ENCODE measurements at regions of chr17 and their contacts with region 1.

Region 1: GRCh38 chr17:17356149-17356930 is 53.2 kb downstream of the NT5M start:
- DNase-seq: no peak
- H3K4me3 ChIP-seq: no peak overlapping the region
- H3K27ac ChIP-seq: no peak overlapping the region
- H3K4me1 ChIP-seq: peaks cover 0 to 24% (median 0%) of the 10 kb centered on the region in 3 donors
- H3K27me3 ChIP-seq: peaks cover 0 to 21% (median 0%) of the 10 kb centered on the region in 4 donors
- CTCF ChIP-seq: peak; percentile 95 to 100 (median 98)
- POLR2A ChIP-seq: no peak

Region 2: DNA sequence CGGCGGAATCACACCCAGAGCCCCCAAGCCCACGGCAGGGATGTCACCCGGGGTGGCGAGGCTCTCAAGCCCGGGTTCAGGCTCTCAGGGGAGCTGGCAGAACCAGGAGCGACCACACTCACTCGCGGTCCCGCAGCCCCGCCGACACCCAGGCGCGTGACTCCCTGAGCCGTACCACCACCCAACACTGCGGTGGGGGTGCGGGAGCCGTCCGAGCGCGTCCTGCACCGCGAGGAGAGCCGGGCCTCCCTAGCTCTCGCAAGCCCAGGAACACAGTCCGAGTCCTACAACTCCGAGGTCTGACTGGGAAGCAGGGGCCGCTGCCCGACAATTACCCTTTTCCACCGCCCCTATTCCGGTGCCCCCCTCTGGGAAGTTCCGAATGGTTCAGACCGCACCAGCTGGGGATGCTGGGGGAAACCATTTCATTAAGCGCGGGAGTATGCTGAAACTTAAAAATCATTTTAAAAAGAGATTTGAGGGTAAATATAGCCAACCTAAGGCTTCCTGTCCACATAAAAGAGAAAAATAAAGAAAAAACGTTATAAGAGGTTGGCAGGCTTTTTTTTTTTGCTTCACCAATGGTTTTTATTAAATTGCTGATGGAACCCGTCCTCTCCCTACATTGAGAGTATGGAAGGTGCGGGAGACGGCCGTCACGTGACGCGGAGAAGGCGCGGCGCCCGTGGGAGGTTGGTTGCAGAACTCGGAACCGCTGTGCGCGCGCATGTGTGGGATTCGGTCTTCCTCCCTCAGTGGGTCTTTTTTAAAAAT is 119.1 kb before region 1 on chr17 and contains the start of gene FLCN:
- intact Hi-C with region 1: no loop called
- DNase-seq: peak; percentile 57
- H3K4me3 ChIP-seq: peak within 1 kb of the TSS; percentile 85 to 96 (median 92)
- H3K27ac ChIP-seq: peak within 1 kb of the TSS; percentile 96 to 98 (median 97)
- H3K4me1 ChIP-seq: peaks cover 11 to 46% (median 25%) of the 10 kb centered on the region in 3 donors
- H3K27me3 ChIP-seq: no peaks in the 10 kb centered on the region
- CTCF ChIP-seq: peak in 2 of 6 experiments; percentile 21 to 32
- POLR2A ChIP-seq: peak in 3 of 4 donors; percentile 20 to 77 (median 62)
- total RNA-seq, gene FLCN: 11.6 to 27.5 (median 12.4) TPM

Region 3: GRCh38 chr17:17496189-17497064 is 140.1 kb after region 1 on chr17 and contains the start of gene RASD1:
- intact Hi-C with region 1: loop called (anchors 10 kb)
- DNase-seq: no peak
- H3K4me3 ChIP-seq: peak within 1 kb of the TSS; percentile 58 to 77 (median 62)
- H3K27ac ChIP-seq: peak within 1 kb of the TSS; percentile 80 to 87 (median 86)
- H3K4me1 ChIP-seq: peaks cover 18 to 43% (median 20%) of the 10 kb centered on the region in 3 donors
- H3K27me3 ChIP-seq: peaks cover 0 to 20% (median 0%) of the 10 kb centered on the region in 4 donors
- CTCF ChIP-seq: peak; percentile 90 to 98 (median 96)
- POLR2A ChIP-seq: peak in 3 of 4 donors; percentile 50 to 98 (median 97)
- total RNA-seq, gene RASD1: 1.1 to 8.4 (median 4.3) TPM

Region 4: DNA sequence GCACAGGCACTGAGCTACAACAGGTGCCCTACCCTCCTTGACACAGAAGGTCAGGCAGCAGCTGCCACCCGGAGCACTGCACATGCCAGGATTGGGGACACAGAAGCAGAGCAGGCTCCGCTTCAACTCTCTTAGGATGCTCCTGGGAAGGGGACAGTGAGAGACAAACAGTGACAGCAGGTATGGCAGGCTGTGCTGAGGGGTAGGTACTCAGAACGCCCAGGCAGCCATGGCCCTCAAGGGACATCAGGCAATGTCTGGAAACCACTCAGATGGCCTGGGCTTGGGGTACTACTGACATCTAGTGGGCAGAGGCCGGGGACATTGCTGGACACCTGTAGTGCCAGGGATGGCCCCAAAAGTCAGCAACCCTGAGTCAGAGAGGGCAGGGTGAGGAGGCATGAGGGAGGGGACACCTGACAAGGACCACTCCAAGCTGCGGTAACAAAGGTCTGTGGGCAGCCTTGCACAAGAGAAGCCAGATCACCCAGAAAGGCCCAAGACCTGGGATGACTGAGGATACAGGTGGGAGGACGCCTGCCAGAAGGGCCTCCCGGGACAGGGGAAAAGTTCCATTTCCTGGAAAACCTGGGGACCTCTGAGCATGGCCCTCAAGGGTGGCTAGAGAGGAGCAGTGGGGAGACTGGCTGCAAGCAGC is 213.9 kb after region 1 on chr17:
- intact Hi-C with region 1: loop called (anchors 5 kb)
- DNase-seq: no peak
- H3K4me3 ChIP-seq: no peak overlapping the region
- H3K27ac ChIP-seq: no peak overlapping the region
- H3K4me1 ChIP-seq: peaks cover 16 to 44% (median 33%) of the 10 kb centered on the region in 3 donors
- H3K27me3 ChIP-seq: no peaks in the 10 kb centered on the region
- CTCF ChIP-seq: peak in 3 of 6 experiments; percentile 8 to 32 (median 11)
- POLR2A ChIP-seq: no peak

Region 5: DNA sequence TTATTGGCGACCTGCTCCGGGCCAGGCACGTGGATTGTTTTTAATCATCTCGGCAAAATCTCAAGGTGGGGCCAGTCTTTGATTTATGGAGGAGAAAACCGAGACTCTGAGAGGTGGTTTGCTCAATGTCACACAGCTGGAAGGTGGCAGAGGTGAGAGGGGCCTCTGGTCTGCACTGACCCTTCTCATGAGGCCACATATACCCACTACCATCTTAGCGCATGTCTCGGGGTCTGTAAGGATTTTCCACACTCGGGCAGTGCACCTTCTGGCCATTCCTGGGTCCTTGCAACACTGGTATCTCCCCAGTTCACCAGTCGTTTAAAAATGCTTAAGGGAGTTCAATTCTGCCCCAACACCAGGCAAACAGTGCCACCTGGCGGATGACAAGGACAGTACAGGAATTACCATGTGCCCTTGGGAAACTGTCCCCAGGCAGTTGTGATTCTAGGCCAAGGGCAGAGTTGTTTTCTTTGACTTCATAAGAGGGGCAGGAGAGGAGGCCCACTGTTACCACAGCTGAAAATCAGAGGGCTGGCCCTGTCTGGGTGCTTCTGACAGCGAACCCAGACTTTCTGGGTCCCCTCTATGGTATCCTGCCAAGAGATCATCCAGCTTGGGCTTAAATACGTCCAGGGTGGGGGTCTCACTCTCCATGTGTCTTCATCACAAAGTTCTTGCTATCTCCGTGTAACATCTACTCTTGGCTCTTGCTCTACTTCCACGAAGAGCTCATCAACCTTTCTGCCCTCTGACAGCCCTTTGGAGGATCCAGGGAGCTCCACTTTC is 285.5 kb after region 1 on chr17:
- intact Hi-C with region 1: loop called (anchors 5 kb)
- DNase-seq: no peak
- H3K4me3 ChIP-seq: no peak overlapping the region
- H3K27ac ChIP-seq: no peak overlapping the region
- H3K4me1 ChIP-seq: peaks cover 0 to 15% (median 2%) of the 10 kb centered on the region in 3 donors
- H3K27me3 ChIP-seq: peaks cover 0 to 3% (median 0%) of the 10 kb centered on the region in 4 donors
- CTCF ChIP-seq: peak; percentile 89 to 94 (median 92)
- POLR2A ChIP-seq: no peak